ENCODE measurements at regions of chr2 and their contacts with region 1.

Region 1: DNA sequence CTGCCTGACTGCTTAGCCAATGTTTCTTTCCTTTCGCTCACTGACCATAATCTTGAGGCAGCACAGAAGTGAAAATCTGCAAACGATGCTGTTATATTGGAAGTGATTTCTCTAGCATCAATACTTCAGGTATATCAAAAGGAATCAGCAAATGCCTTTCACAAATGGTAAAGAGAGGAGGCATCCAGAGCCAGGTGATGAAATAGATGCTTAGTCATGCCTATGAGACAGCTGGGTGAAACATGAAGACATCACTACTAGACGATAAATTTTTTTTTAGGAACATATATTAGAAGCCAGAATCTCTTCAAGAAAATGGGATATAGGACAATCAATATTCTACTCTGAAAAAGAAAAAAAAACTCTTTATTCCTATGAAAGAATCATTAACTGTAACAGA is 249.2 kb upstream of the SLC39A10 start:
- DNase-seq: no peak
- ATAC-seq: no peak
- H3K4me3 ChIP-seq: no peak overlapping the region
- H3K4me3 Mint-ChIP-seq: no peak overlapping the region
- H3K27ac ChIP-seq: no peak overlapping the region
- H3K27ac Mint-ChIP-seq: no peak overlapping the region
- H3K4me1 ChIP-seq: no peaks in the 10 kb centered on the region
- H3K4me1 Mint-ChIP-seq: peaks cover 3% of the 10 kb centered on the region
- H3K27me3 ChIP-seq: no peaks in the 10 kb centered on the region
- H3K27me3 Mint-ChIP-seq: no peaks in the 10 kb centered on the region
- CTCF ChIP-seq: no peak

Region 2: GRCh38 chr2:195343942-195344530 is 63.7 kb before region 1 on chr2:
- CTCF ChIA-PET with region 1: no interaction called
- POLR2A ChIA-PET with region 1: no interaction called
- intact Hi-C with region 1: no loop called
- DNase-seq: no peak
- ATAC-seq: no peak
- H3K4me3 ChIP-seq: no peak overlapping the region
- H3K4me3 Mint-ChIP-seq: no peak overlapping the region
- H3K27ac ChIP-seq: no peak overlapping the region
- H3K27ac Mint-ChIP-seq: no peak overlapping the region
- H3K4me1 ChIP-seq: no peaks in the 10 kb centered on the region
- H3K4me1 Mint-ChIP-seq: no peaks in the 10 kb centered on the region
- H3K27me3 ChIP-seq: no peaks in the 10 kb centered on the region
- H3K27me3 Mint-ChIP-seq: no peaks in the 10 kb centered on the region
- CTCF ChIP-seq: no peak

Region 3: DNA sequence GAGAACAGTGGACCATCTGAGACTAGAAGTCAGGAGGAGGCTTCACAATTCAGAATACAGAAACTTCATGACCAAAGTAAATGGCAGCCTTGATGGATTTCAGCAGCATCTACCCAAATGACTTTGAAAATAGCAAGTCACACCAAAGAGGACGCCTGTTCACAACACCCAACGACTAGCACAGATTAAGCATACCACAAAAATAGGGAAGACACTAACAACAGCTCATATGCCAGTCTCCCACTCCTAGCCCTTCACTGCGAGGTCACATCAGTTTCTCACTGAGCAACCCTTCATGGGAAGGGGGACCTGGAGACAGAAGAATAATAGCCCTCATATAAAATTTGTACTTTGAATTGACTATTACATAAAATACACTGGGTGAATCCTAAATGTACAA is 20.9 kb after region 1 on chr2:
- CTCF ChIA-PET with region 1: no interaction called
- POLR2A ChIA-PET with region 1: no interaction called
- intact Hi-C with region 1: loop called in 1 of 2 experiments (anchors 2 kb)
- DNase-seq: no peak
- ATAC-seq: no peak
- H3K4me3 ChIP-seq: no peak overlapping the region
- H3K4me3 Mint-ChIP-seq: no peak overlapping the region
- H3K27ac ChIP-seq: no peak overlapping the region
- H3K27ac Mint-ChIP-seq: no peak overlapping the region
- H3K4me1 ChIP-seq: no peaks in the 10 kb centered on the region
- H3K4me1 Mint-ChIP-seq: no peaks in the 10 kb centered on the region
- H3K27me3 ChIP-seq: no peaks in the 10 kb centered on the region
- H3K27me3 Mint-ChIP-seq: no peaks in the 10 kb centered on the region
- CTCF ChIP-seq: no peak